Cardiac septum (tissue), 1 donor: ENCODE measurements at regions of chr1 and their contacts with region 1.

Region 1: DNA sequence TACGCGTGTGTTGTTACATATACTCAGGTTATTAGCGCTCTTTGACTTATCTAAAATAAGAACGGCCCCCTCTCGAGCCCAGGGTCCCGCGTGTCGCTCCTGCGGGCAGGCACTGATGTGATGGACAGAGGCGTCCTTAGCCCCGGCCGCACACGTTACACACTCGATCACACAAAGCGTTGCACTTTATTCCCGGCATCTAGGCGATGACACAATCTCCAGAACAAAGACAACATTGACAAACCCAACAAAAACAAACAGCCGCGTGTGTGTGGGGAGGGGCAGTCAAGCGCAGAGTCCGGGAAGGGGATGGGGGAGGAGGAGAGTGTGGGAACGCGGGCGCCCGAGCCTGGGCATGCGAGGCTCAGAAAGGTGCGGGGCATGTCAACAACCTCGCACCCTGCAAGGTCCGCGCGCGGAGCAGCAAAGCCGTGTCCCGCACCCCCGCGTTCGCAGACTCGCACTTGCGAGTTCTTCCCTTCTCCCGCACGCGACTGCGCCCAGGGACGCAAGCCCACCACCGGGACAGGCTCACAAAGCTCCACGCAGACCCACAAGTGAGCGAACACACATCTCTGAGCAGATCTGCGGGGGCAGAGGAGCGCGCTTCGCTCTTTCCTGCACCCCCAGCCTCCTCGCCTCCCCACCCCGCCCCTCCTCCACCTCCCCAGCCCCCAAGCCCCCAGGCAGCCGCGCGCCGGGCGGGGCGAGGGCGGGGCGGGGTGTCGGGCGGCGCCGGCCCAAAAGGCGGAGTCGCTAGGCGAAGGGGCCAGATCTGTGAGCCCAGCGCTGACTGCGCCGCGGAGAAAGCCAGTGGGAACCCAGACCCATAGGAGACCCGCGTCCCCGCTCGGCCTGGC is at the start of gene EFNA1:
- DNase-seq: peak; percentile 81
- total RNA-seq, gene EFNA1: 30.2 TPM

Region 2: DNA sequence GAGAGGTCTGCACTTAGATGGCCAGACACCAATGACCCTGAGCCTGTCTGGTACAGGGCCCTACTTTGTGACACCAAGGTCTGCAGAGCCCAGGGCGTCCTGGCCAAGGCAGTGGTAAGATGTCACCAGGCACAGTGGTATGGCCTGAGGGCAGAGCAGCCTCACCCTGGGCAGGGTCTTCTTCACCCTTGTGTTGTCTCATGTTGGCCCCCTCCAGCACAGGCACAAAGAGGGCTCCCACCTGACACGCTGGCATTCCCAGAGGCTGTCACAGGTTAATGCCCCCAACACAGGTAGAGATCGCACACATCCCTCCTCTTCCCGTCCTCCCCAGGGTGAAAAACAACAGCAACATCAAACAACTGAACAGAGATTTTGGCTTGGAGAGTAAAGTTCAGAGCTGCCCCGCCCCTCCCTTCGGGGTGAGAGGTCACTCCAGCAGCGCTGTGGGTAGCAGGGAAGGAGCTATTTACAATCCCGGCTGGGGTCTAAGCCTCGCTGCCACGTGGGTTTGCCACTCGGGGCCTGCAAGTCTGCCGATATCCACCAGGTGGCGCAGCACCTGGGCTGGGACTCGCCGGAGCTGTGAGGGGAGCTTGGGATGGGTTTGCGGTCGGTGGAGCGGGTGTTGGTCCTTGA is 36.1 kb before region 1 on chr1:
- intact Hi-C with region 1: loop called (anchors 2 kb)
- DNase-seq: peak; percentile 87

Region 3: DNA sequence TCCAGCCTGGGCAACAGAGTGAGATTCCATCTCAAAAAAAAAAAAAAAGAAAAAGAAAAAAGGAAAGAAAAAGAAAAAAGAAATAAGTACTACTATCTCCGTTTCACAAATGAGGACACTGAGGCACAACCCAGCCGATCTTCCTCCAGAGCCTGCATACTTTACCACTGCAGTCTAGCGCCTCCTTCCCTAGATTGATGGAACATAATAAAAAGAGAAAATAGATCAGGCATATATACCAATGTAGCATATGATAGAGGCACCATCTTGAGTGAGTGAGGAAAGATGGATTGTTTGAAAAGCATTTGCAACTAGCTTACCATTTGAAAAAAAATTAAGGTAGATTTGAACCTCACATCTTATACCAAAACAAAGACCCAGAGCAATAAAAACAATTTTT is 18.2 kb after region 1 on chr1:
- intact Hi-C with region 1: no loop called
- DNase-seq: no peak